ENCODE measurements at regions of chr15 and their contacts with region 1.

Region 1: GRCh38 chr15:60520825-60521368 is 42.0 kb upstream of the ICE2 start:
- DNase-seq: peak; percentile 88
- ATAC-seq: peak; percentile 75
- H3K4me3 Mint-ChIP-seq: no peak overlapping the region
- H3K27ac Mint-ChIP-seq: peak overlapping the region; percentile 44
- H3K4me1 Mint-ChIP-seq: peaks cover 30% of the 10 kb centered on the region
- H3K27me3 Mint-ChIP-seq: no peaks in the 10 kb centered on the region

Region 2: GRCh38 chr15:60326824-60327654 is 193.9 kb before region 1 on chr15:
- CTCF ChIA-PET with region 1: interaction called, 11 read pairs
- POLR2A ChIA-PET with region 1: no interaction called
- DNase-seq: peak; percentile 60
- ATAC-seq: no peak
- H3K4me3 Mint-ChIP-seq: no peak overlapping the region
- H3K27ac Mint-ChIP-seq: no peak overlapping the region
- H3K4me1 Mint-ChIP-seq: no peaks in the 10 kb centered on the region
- H3K27me3 Mint-ChIP-seq: peaks cover 40% of the 10 kb centered on the region

Region 3: GRCh38 chr15:60337076-60337475 is 183.8 kb before region 1 on chr15:
- CTCF ChIA-PET with region 1: no interaction called
- POLR2A ChIA-PET with region 1: no interaction called
- DNase-seq: no peak
- ATAC-seq: no peak
- H3K4me3 Mint-ChIP-seq: no peak overlapping the region
- H3K27ac Mint-ChIP-seq: no peak overlapping the region
- H3K4me1 Mint-ChIP-seq: no peaks in the 10 kb centered on the region
- H3K27me3 Mint-ChIP-seq: peaks cover 36% of the 10 kb centered on the region

Region 4: GRCh38 chr15:60496853-60497252 is 24.0 kb before region 1 on chr15:
- CTCF ChIA-PET with region 1: interaction called, 11 read pairs
- POLR2A ChIA-PET with region 1: no interaction called
- DNase-seq: no peak
- ATAC-seq: no peak
- H3K4me3 Mint-ChIP-seq: no peak overlapping the region
- H3K27ac Mint-ChIP-seq: no peak overlapping the region
- H3K4me1 Mint-ChIP-seq: peaks cover 4% of the 10 kb centered on the region
- H3K27me3 Mint-ChIP-seq: no peaks in the 10 kb centered on the region

Region 5: GRCh38 chr15:60541481-60542299 is 20.8 kb after region 1 on chr15:
- CTCF ChIA-PET with region 1: interaction called, 111 read pairs
- POLR2A ChIA-PET with region 1: interaction called, 6 read pairs
- DNase-seq: no peak
- ATAC-seq: no peak
- H3K4me3 Mint-ChIP-seq: no peak overlapping the region
- H3K27ac Mint-ChIP-seq: peak overlapping the region; percentile 44
- H3K4me1 Mint-ChIP-seq: peaks cover 86% of the 10 kb centered on the region
- H3K27me3 Mint-ChIP-seq: no peaks in the 10 kb centered on the region

Region 6: DNA sequence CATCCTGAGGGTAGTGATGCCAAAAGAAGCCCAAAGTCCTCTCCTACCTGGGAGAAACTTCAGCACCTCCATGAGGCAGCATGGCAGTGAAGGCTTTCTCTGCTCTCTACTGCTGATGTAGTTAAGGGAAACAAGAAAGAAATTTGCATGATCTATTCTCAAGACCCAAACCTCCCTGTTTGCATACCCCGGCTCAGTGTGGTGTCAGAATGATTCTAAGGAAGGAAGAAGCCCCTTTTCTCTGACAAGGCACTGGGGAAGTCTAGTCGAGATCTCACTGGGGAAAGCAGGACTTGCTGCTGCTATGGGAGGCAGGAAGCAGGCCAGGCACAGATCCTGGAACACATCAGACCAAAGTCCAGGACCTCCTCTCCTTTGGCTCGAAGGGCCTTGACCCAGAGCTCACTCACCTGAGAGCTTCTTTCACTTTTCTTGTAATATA is 47.4 kb after region 1 on chr15:
- CTCF ChIA-PET with region 1: interaction called, 34 read pairs
- POLR2A ChIA-PET with region 1: no interaction called
- DNase-seq: no peak
- ATAC-seq: no peak
- H3K4me3 Mint-ChIP-seq: peak overlapping the region; percentile 19
- H3K27ac Mint-ChIP-seq: peak overlapping the region; percentile 73
- H3K4me1 Mint-ChIP-seq: peaks cover 87% of the 10 kb centered on the region
- H3K27me3 Mint-ChIP-seq: no peaks in the 10 kb centered on the region

Region 7: DNA sequence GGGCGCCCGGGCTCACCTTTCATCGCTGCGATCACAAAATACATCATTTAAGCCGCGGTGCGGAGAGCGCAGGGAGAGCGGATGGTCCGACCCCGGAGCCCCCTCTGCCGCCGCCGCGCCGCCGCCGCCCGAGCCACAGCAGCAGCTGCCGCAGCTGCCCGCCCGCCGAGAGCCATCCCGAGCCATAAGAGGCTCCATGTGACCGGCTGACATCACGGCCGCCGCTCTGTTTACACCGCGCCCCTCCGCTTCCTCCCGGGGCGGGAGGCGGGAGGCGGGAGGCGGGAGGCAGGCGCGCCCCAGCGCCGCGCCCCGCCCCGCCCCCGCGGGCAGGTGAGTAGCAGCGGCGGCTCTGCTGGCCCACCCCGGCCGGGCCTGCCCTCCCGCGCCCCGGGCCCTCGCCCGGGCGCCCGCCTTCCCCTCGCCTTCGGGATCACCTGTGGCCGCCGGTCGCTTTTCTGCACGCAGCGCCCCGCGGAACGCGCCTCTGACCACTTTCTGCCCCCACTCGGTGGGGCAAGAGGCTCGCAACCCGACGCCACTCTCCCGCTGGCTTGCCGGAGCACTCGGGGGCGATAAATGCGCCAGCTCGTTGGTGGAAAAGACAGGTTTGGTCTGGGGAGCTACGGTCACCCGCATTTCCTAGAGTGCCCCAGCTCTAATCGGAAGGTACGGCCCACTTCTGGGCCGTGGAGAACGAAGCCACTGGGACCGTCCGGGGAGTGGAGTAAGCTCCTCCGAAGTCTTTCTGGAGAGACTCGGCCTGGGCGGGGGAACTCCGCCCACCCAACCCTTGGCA is 71.7 kb after region 1 on chr15:
- CTCF ChIA-PET with region 1: interaction called, 102 read pairs
- POLR2A ChIA-PET with region 1: interaction called, 13 read pairs
- DNase-seq: peak; percentile 90
- ATAC-seq: peak; percentile 89
- H3K4me3 Mint-ChIP-seq: peak overlapping the region; percentile 82
- H3K27ac Mint-ChIP-seq: peak overlapping the region; percentile 83
- H3K4me1 Mint-ChIP-seq: peaks cover 58% of the 10 kb centered on the region
- H3K27me3 Mint-ChIP-seq: no peaks in the 10 kb centered on the region